B cell (primary cell): ENCODE measurements at regions of chr15 and their contacts with region 1.

Region 1: GRCh38 chr15:79004336-79004735 is 59.5 kb upstream of the CTSH start:
- DNase-seq: peak; percentile 77
- ATAC-seq: peak; percentile 85
- H3K4me3 ChIP-seq: peak overlapping the region in 2 of 5 experiments; percentile 9 to 28
- H3K4me3 Mint-ChIP-seq: peak overlapping the region; percentile 81
- H3K27ac ChIP-seq: peak overlapping the region; percentile 58 to 60
- H3K27ac Mint-ChIP-seq: peak overlapping the region; percentile 95
- H3K4me1 ChIP-seq: peaks cover 30 to 45% of the 10 kb centered on the region in 2 donors
- H3K4me1 Mint-ChIP-seq: peaks cover 48% of the 10 kb centered on the region
- H3K27me3 ChIP-seq: no peaks in the 10 kb centered on the region
- H3K27me3 Mint-ChIP-seq: no peaks in the 10 kb centered on the region
- CTCF ChIP-seq: no peak

Region 2: DNA sequence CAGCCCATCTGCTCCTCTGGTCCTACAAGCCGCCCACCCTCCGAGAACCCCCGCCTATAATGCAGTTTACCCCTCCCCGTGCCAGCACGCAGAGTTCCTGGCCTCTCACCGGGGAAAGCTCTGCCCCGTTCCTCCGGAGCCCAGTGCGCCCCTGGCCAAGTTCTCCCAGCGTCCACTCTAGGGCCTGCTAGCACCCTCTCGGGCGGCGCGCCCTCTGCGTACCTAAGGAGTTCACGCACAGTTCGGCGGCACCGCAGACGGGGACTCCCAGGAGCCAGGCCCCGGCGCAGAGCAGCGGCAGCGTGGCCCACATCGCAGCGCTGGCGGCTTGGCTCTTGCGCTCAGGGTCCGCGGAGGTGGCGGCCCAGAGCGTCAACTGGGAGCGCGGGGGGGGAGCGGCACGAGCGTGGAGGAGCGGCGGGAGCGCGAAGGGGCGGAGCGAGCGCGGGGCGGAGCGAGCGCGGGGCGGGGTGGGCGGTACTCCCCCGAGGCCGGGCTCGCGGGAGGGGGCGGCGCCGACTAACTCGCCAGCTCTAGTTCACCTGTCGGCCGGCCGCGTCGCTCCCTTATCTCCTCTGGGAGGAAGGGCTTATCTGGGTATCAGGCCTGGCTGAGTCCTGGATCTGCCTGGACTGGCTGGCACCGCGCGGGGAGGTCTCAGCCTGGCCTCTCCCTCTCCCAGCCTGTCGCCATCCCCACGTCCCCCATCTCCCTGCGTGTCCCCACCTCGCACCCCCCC is 59.5 kb before region 1 on chr15 and contains the start of gene CTSH:
- CTCF ChIA-PET with region 1: interaction called, 6 read pairs
- POLR2A ChIA-PET with region 1: interaction called, 12 read pairs
- intact Hi-C with region 1: loop called (anchors 1 kb)
- DNase-seq: peak; percentile 91
- ATAC-seq: peak; percentile 95
- H3K4me3 ChIP-seq: peak within 1 kb of the TSS; percentile 61 to 97 (median 94)
- H3K4me3 Mint-ChIP-seq: peak within 1 kb of the TSS; percentile 98
- H3K27ac ChIP-seq: peak within 1 kb of the TSS; percentile 77 to 83
- H3K27ac Mint-ChIP-seq: peak within 1 kb of the TSS; percentile 95
- H3K4me1 ChIP-seq: peaks cover 34 to 48% of the 10 kb centered on the region in 2 donors
- H3K4me1 Mint-ChIP-seq: peaks cover 32% of the 10 kb centered on the region
- H3K27me3 ChIP-seq: no peaks in the 10 kb centered on the region
- H3K27me3 Mint-ChIP-seq: no peaks in the 10 kb centered on the region
- CTCF ChIP-seq: no peak
- total RNA-seq, gene CTSH: 438 and 441 TPM in 2 replicates

Region 3: DNA sequence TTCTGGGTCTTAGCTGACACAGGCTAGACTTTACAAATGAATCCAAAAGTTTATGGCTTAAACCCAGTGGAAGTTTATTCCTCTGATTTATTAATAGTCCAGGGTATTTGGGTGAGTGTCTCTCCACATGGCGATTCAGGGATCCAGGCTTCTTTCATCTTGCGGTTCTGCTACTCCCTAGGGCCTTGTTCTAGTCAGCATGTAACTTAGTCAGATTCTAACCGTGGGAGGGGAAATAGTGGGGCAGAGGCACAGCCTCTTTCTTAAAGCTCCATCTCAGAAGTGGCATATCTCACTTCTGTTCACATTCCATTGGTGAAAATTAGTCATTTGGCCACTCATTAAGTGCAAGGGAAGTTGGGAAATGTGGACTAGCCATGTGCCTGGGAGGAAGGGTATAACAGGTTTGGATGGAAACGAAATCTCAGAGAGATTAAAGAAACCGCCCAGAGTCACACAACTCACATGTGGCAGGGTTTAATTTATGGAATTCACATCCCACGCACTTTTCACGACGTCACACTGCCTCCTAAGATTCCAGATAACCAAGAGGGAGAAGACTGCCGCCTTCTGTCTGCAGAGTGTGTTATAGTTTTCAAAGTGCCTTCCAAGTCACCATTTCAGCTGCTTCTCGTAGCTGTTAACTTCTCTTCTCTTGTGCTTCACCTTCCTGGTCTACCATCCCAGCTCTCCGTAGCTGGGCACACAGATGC is 97.7 kb after region 1 on chr15:
- CTCF ChIA-PET with region 1: no interaction called
- POLR2A ChIA-PET with region 1: no interaction called
- intact Hi-C with region 1: loop called (anchors 1 kb)
- DNase-seq: no peak
- ATAC-seq: no peak
- H3K4me3 ChIP-seq: no peak overlapping the region
- H3K4me3 Mint-ChIP-seq: no peak overlapping the region
- H3K27ac ChIP-seq: no peak overlapping the region
- H3K27ac Mint-ChIP-seq: no peak overlapping the region
- H3K4me1 ChIP-seq: peaks cover 5% of the 10 kb centered on the region in 2 donors
- H3K4me1 Mint-ChIP-seq: peaks cover 8% of the 10 kb centered on the region
- H3K27me3 ChIP-seq: peaks cover 0 to 9% (median 4%) of the 10 kb centered on the region in 4 experiments
- H3K27me3 Mint-ChIP-seq: peaks cover 44% of the 10 kb centered on the region
- CTCF ChIP-seq: no peak